Dorsolateral prefrontal cortex (tissue), 120 donors: ENCODE measurements at regions of chr1 and their contacts with region 1.

Region 1: GRCh38 chr1:44652445-44653106 is 21.7 kb downstream of the TMEM53 start:
- DNase-seq: peak; percentile 84 to 94 (median 90)
- H3K4me3 ChIP-seq: no peak overlapping the region
- H3K27ac ChIP-seq: peak overlapping the region in 56 of 59 donors; percentile 5 to 94 (median 76)
- H3K27me3 ChIP-seq: no peaks in the 10 kb centered on the region
- CTCF ChIP-seq: peak; percentile 83 to 98 (median 95)

Region 2: DNA sequence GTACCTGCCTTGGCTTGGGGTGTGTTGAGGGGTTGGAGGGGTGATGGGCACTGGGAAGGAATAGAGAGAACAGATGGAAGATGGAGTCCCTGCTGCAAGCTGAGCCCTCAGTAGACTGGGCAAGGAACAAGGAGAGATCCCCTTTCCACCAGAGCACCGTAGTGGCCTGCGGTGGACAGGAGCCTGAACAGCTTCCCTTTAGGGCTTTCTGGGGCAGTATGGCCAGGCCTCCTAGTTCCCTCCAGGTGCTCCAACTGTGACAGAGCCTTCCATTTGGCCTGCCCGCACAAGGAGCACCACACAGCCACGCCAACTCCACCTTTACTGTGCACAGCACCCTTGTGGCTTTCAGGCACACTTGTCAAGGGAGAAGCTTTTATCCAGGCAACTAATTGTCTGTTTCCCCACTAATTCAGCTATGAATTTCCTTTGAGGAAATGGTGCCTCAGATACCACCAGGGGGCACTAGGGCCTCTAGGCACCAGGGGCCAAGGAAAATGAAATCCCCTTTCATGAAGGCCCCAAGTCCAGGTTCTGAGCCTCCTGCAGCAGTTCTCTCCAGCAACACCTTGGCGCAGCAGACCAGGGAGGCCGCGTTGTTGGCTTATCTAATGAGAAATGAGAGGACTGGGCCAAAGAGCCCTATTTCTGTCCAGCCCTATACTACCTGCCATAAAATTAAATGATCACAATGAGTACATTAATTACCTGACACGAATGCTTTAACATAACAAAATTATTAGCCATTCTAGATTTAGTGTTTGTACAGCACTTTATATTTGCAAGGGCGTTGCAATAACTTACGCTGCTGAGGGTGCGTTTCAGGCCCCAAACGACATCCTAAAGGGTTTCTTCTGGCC is 274.4 kb before region 1 on chr1:
- intact Hi-C with region 1: loop called (anchors 2 to 5 kb)
- DNase-seq: peak in 7 of 10 donors; percentile 31 to 63 (median 50)
- H3K4me3 ChIP-seq: no peak overlapping the region
- H3K27ac ChIP-seq: peak overlapping the region in 38 of 59 donors; percentile 3 to 74 (median 46)
- H3K27me3 ChIP-seq: no peaks in the 10 kb centered on the region
- CTCF ChIP-seq: peak; percentile 62 to 92 (median 78)

Region 3: GRCh38 chr1:44464361-44464760 is 188.2 kb before region 1 on chr1:
- intact Hi-C with region 1: no loop called
- DNase-seq: no peak
- H3K4me3 ChIP-seq: no peak overlapping the region
- H3K27ac ChIP-seq: peak overlapping the region in 34 of 59 donors; percentile 0 to 79 (median 38)
- H3K27me3 ChIP-seq: no peaks in the 10 kb centered on the region
- CTCF ChIP-seq: no peak

Region 4: DNA sequence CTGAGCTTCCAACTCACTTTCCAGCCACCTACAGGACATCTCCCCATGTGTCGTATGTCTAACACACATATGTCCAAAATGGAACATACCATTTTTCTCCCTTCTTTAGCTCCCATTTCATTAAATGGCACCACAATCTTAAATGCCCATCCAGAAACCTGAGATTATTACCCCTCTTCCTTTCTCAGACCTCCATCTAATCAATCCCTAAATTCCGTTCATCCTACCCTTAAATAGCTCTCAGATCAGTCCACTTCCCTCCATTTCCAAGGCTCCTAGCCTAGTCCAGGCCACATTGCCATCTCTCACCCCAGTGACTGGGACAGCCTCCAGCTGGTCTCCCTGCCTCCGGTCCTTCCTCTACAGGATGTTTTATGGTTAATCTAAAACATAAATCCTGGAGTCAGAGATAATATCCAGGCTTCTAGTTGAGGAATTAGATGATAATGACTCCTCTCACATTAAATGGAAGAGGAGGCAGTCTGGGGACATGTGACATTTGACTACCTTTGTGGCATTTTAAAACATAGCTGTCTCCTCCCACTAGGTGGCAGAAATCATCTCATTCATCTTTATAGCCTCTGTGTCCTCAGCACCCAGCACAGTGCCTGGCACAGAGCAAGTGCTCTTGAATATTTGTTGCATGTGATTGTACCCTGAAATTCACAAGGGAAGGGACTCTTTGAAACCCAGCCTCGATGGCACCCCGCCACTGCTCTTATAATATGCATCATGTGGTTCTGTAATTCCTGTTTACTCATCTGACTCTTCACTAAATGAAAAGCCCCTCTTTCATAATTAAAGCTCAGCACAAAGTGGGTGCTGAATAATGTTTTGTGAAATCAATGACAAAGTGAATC is 80.6 kb before region 1 on chr1:
- intact Hi-C with region 1: no loop called
- DNase-seq: peak in 2 of 10 donors; percentile 28 to 50
- H3K4me3 ChIP-seq: no peak overlapping the region
- H3K27ac ChIP-seq: peak overlapping the region in 57 of 59 donors; percentile 41 to 100 (median 93)
- H3K27me3 ChIP-seq: no peaks in the 10 kb centered on the region
- CTCF ChIP-seq: peak in 55 of 56 donors; percentile 23 to 74 (median 55)

Region 5: GRCh38 chr1:44616991-44617702 is 35.4 kb before region 1 on chr1:
- intact Hi-C with region 1: no loop called
- DNase-seq: no peak
- H3K4me3 ChIP-seq: peak overlapping the region in 48 of 59 donors; percentile 5 to 56 (median 36)
- H3K27ac ChIP-seq: peak overlapping the region in 49 of 59 donors; percentile 1 to 82 (median 66)
- H3K27me3 ChIP-seq: peaks cover 0 to 15% (median 0%) of the 10 kb centered on the region in 45 donors
- CTCF ChIP-seq: no peak